Adrenal gland (tissue), 19 donors: ENCODE measurements at regions of chr11 and their contacts with region 1.

Region 1: DNA sequence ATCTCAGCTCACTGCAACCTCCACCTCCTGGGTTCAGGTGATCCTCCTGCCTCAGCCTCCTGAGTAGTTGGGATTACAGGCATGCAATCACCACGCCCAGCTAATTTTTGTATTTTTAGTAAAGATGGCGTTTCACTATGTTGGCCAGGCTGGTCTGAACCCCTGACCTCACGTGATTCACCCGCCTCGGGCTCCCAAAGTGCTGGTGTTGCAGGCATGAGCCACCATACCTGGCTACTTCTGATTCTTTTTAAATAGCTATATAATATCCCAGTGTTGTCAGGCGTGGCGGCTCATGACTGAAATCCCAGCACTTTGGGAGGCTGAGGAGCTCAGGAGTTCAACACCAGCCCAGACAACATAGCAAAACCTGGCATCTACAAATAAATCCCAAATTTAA is 20.7 kb downstream of the TMEM41B start:
- DNase-seq: no peak
- H3K4me3 ChIP-seq: no peak overlapping the region
- H3K27ac ChIP-seq: no peak overlapping the region
- H3K4me1 ChIP-seq: no peaks in the 10 kb centered on the region
- H3K27me3 ChIP-seq: no peaks in the 10 kb centered on the region
- CTCF ChIP-seq: no peak
- POLR2A ChIP-seq: no peak

Region 2: GRCh38 chr11:9137293-9138132 is 156.1 kb before region 1 on chr11:
- intact Hi-C with region 1: no loop called
- DNase-seq: peak; percentile 69 to 92 (median 84)
- H3K4me3 ChIP-seq: no peak overlapping the region
- H3K27ac ChIP-seq: peak overlapping the region in 4 of 5 donors; percentile 56 to 80 (median 66)
- H3K4me1 ChIP-seq: peaks cover 0 to 34% of the 10 kb centered on the region in 2 donors
- H3K27me3 ChIP-seq: no peaks in the 10 kb centered on the region
- CTCF ChIP-seq: peak; percentile 92 to 96 (median 94)
- POLR2A ChIP-seq: no peak

Region 3: DNA sequence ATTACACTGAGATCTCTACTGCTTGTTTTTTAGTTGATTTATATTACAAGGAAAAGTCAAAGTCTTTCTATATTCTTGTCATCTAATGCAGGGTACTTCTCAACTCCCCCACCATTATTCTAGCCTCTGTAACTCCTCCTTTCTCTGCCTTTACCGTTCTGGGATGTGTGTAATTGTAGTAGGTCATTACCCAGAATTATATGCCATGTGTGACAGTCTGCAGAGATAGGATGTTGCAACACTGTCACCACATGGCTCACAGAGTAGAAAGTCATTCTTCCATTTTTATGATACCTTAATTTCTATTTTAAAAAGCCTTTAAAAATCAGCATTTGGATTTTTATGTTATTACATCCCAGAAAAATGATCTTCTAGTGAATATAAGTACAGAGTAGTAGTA is 199.8 kb after region 1 on chr11:
- intact Hi-C with region 1: loop called in 1 of 2 experiments (anchors 10 kb)
- DNase-seq: no peak
- H3K4me3 ChIP-seq: no peak overlapping the region
- H3K27ac ChIP-seq: no peak overlapping the region
- H3K4me1 ChIP-seq: no peaks in the 10 kb centered on the region
- H3K27me3 ChIP-seq: no peaks in the 10 kb centered on the region
- CTCF ChIP-seq: no peak
- POLR2A ChIP-seq: no peak

Region 4: GRCh38 chr11:9601037-9601875 is 307.6 kb after region 1 on chr11:
- intact Hi-C with region 1: no loop called
- DNase-seq: peak in 3 of 7 donors; percentile 19 to 23 (median 22)
- H3K4me3 ChIP-seq: no peak overlapping the region
- H3K27ac ChIP-seq: peak overlapping the region in 1 of 5 donors; percentile 51
- H3K4me1 ChIP-seq: no peaks in the 10 kb centered on the region
- H3K27me3 ChIP-seq: no peaks in the 10 kb centered on the region
- CTCF ChIP-seq: no peak
- POLR2A ChIP-seq: no peak